OCI-LY7 (cell line): ENCODE measurements at regions of chr13 and their contacts with region 1.

Region 1: GRCh38 chr13:91106565-91106964 is 240.9 kb upstream of the MIR17HG start:
- DNase-seq: no peak
- H3K4me3 ChIP-seq: no peak overlapping the region
- H3K27ac ChIP-seq: no peak overlapping the region
- H3K4me1 ChIP-seq: no peaks in the 10 kb centered on the region
- CTCF ChIP-seq: no peak

Region 2: DNA sequence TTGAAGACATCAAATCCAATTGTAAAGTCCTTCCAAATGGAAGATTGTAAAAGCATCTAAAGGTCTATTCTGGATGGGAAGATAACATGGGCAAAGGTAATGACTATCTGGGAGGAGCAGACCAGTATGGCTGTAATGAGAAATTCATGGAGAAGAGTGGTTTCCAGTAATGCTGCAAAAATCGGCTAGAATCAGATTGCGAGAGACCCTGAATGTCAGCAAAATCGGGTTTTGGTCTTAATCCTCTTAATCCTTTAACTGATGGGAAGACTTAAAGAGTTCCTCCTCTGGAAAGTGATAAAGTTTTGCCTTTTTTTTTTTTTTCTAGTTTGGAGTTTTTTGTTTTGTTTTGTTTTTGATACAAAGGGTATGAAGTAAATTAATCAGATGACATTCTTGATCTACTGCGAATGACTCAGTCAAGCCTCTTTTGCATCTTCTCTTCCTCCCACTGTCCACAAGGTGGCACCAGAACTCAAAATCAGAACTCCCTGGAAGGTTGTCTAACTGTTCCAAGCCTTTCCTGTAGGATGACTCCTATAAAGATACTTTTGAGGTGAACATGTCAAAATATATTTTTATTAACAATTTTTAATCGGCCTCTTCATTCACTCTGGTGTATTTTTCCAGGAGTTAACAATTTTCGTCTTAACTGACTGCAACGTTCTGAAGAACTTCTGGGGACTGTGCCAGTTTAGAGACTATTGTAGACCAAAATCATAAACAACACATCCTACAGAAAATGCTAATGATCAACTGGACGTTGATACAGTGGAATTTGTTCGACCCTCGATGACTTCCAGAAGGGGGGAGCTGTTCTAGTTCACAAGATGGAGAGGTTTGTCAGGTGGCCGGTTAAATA is 27.6 kb after region 1 on chr13:
- CTCF ChIA-PET with region 1: no interaction called
- POLR2A ChIA-PET with region 1: interaction called, 11 read pairs
- intact Hi-C with region 1: no loop called
- DNase-seq: peak; percentile 88
- H3K4me3 ChIP-seq: no peak overlapping the region
- H3K27ac ChIP-seq: no peak overlapping the region
- H3K4me1 ChIP-seq: no peaks in the 10 kb centered on the region
- CTCF ChIP-seq: no peak